ENCODE measurements at regions of chr17 and their contacts with region 1.

Region 1: DNA sequence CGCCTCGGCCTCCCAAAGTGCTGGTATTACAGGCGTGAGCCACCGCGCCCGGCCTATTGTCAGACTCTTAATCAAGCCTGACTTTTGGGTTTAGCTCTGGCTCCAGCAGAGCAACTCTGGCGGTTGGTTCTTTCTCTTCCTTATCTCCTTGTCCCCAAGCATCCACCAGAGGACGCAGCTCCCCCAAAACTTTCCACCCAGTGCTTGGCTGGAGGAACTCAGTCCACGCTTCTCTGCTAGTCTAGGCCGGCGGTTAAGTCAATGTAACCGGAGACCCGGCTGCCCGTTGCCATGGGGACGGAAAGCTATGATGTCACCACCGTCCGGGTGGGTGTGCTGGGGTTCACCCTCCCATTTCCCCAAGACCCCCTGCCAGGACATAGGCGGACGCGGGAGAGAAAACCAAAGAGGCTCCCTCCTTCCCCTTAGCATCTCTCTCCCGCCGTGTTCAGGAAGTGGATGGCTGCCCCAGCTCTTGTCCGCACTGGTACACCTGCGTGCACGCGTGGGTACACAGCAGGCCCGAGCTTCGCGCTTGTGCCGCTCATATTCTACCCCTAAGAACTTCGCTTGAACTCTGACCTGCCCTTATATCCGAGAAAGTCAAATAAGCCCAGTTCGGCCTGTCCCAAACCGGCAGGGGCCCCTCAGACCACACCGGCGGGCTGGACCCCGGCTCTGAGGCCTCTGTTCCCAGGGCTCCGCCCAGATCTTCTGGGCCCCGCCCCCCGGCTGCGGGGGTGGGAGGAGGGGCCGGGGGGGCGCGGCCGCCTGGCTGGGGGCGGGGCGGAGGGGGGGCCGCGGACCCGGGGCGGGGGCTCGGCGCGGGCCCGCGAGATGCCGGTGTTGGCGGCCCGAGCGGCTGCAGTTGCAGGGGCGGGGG is at the start of gene RND2:
- DNase-seq: peak; percentile 94
- H3K4me3 Mint-ChIP-seq: peak within 1 kb of the TSS; percentile 79
- H3K27ac Mint-ChIP-seq: peak within 1 kb of the TSS; percentile 89
- H3K4me1 Mint-ChIP-seq: peaks cover 22% of the 10 kb centered on the region
- H3K27me3 Mint-ChIP-seq: peaks cover 43% of the 10 kb centered on the region
- CTCF ChIP-seq: peak; percentile 37
- total RNA-seq, gene RND2: 0.15 and 0.40 TPM in 2 replicates

Region 2: DNA sequence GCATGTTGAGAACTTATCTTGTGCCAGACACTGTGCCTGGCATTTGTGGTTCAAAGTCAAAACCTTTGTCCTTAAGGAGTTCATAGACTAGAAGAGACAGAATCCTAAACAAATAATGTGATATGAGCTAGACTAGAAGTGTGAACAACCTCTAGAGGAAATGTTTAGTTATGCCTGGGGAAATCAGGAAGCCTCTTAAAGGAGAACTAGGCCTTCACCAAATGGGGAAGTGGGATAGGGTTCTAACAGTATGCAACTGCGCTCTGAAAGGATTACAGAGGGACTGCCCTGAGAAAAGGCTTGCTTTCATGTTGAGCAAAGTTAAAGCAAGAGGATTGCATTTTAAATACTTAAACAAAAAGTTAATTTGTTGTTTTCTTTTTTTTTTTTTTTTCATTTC is 39.4 kb before region 1 on chr17:
- CTCF ChIA-PET with region 1: no interaction called
- intact Hi-C with region 1: no loop called
- DNase-seq: no peak
- H3K4me3 Mint-ChIP-seq: no peak overlapping the region
- H3K27ac Mint-ChIP-seq: peak overlapping the region; percentile 56
- H3K4me1 Mint-ChIP-seq: peaks cover 32% of the 10 kb centered on the region
- H3K27me3 Mint-ChIP-seq: no peaks in the 10 kb centered on the region
- CTCF ChIP-seq: no peak

Region 3: DNA sequence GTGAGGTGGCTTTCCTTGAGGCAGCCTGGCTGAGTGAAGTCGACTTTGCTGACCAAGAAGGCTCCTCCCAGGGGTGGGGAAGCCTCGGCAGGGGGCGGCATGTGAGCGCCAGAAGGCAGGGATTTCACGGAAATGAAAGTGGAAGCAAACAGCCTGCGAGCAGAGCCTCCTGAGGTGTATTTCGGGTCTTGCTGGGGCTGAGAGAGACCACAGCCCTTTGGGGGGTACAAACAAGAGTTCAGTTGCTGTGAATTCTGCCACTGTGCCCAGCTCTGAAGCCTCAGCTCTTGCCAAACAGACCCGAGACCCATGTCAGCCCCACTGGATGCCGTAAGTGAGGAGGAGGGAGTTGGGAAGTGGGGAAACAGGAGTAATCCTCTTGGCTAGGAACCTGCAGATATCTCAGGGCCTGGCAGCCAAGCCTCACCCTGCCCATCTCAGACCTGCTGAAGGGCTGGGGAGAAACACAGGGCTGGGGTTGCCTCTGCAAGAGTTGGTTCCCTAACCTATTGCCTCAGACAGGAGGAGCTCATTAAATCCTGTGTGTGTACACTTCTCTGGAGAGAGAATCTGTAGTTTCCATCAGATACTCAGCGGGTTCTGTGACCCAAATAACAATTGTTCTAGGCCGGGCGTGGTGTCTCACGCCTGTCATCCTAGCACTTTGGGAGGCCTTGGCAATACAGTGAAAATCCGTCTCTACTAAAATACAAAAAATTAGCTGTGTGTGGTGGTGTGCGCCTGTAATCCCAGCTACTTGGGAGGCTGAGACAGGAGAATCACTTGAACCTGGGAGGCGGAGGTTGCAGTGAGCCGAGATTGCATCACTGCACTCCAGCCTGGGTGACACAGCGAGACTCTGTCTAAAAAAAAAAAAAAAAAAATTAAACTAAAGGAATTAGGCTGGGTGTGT is 17.8 kb before region 1 on chr17 and contains the start of gene IFI35:
- CTCF ChIA-PET with region 1: interaction called, 15 read pairs
- intact Hi-C with region 1: no loop called
- DNase-seq: peak; percentile 95
- H3K4me3 Mint-ChIP-seq: peak within 1 kb of the TSS; percentile 91
- H3K27ac Mint-ChIP-seq: peak within 1 kb of the TSS; percentile 86
- H3K4me1 Mint-ChIP-seq: peaks cover 19% of the 10 kb centered on the region
- H3K27me3 Mint-ChIP-seq: no peaks in the 10 kb centered on the region
- CTCF ChIP-seq: peak; percentile 33
- total RNA-seq, gene IFI35: 98.6 and 195 TPM in 2 replicates

Region 4: GRCh38 chr17:43170766-43171585 is 146.3 kb after region 1 on chr17 and contains the start of gene NBR1:
- CTCF ChIA-PET with region 1: interaction called, 3 read pairs
- intact Hi-C with region 1: loop called (anchors 5 kb)
- DNase-seq: peak; percentile 97
- H3K4me3 Mint-ChIP-seq: no peak within 1 kb of the TSS
- H3K27ac Mint-ChIP-seq: no peak within 1 kb of the TSS
- H3K4me1 Mint-ChIP-seq: peaks cover 31% of the 10 kb centered on the region
- H3K27me3 Mint-ChIP-seq: no peaks in the 10 kb centered on the region
- CTCF ChIP-seq: no peak
- total RNA-seq, gene NBR1: 89.0 and 101 TPM in 2 replicates

Region 5: GRCh38 chr17:43211480-43212402 is 187.1 kb after region 1 on chr17 and contains the start of gene TMEM106A:
- CTCF ChIA-PET with region 1: no interaction called
- intact Hi-C with region 1: no loop called
- DNase-seq: no peak
- H3K4me3 Mint-ChIP-seq: no peak within 1 kb of the TSS
- H3K27ac Mint-ChIP-seq: no peak within 1 kb of the TSS
- H3K4me1 Mint-ChIP-seq: no peaks in the 10 kb centered on the region
- H3K27me3 Mint-ChIP-seq: no peaks in the 10 kb centered on the region
- CTCF ChIP-seq: no peak
- total RNA-seq, gene TMEM106A: 3.4 and 5.2 TPM in 2 replicates

Region 6: GRCh38 chr17:43338886-43339516 is 314.4 kb after region 1 on chr17:
- CTCF ChIA-PET with region 1: interaction called, 9 read pairs
- intact Hi-C with region 1: loop called (anchors 10 kb)
- DNase-seq: peak; percentile 91
- H3K4me3 Mint-ChIP-seq: no peak overlapping the region
- H3K27ac Mint-ChIP-seq: no peak overlapping the region
- H3K4me1 Mint-ChIP-seq: peaks cover 35% of the 10 kb centered on the region
- H3K27me3 Mint-ChIP-seq: peaks cover 33% of the 10 kb centered on the region
- CTCF ChIP-seq: peak; percentile 90